ENCODE measurements at regions of chr17 and their contacts with region 1.

Region 1: DNA sequence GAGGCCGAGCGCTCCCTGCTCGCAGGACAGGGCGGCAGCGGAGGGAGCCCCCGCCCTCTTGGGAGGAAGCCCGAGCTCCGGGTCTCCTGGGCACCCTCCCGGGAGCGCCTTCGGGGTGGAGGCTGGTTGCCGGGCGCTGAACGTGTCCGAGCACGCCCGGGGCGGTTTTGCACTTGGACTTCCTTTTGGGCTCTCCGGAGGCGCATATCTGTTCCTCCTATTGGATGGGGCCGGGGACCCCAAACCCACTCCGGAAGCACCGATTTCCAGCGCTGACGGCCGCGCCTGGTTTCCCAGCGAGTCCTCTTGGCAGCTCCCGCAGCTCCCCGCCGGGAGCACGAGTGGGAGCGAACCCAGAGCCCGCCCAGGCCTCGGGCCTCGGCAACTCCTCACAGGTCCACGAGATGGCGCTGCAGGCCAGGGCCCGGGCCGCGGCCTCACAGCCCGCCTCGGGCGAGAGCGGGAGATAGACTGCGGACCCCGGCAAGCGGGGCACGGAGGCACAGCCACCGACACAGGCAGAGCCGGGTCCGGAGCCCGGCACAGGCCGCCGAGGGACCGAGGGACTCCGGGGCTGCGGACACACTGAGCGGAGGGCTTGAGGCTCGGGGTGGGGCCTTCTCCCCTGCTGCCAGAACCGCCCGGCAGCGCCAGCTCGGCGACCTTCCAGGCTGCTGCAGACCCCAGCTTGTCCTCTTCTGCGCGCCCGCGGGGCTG is 12.7 kb downstream of the TBX2 start:
- ATAC-seq: peak; percentile 44 to 81 (median 75)
- H3K4me3 ChIP-seq: peak overlapping the region; percentile 34 to 41 (median 40)
- H3K27ac ChIP-seq: no peak overlapping the region
- H3K4me1 ChIP-seq: peaks cover 0 to 3% of the 10 kb centered on the region in 2 donors

Region 2: DNA sequence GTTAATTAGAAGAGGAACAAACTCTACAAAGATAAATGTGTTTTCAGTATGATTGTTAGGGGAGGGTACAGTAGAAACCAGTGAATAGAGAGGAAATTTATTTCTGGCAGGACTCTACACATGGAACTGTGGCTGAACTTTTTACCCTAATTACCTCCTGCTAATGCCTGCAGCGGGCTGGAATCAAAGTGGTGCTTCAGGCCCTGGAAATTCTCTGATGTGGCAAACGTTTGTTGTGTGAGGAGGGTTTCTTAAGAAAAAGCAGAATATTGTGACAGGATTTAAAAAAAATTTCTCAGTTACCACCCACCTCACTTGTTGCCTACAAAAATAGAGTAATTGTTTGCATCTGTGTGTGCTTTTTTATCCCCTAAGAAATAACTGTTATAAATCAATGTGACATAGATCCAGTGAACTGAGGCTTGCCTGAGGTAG is 580.1 kb before region 1 on chr17:
- in situ Hi-C with region 1: no loop called
- ATAC-seq: peak; percentile 49 to 87 (median 71)
- H3K4me3 ChIP-seq: no peak overlapping the region
- H3K27ac ChIP-seq: no peak overlapping the region
- H3K4me1 ChIP-seq: peaks cover 6 to 14% of the 10 kb centered on the region in 2 donors

Region 3: DNA sequence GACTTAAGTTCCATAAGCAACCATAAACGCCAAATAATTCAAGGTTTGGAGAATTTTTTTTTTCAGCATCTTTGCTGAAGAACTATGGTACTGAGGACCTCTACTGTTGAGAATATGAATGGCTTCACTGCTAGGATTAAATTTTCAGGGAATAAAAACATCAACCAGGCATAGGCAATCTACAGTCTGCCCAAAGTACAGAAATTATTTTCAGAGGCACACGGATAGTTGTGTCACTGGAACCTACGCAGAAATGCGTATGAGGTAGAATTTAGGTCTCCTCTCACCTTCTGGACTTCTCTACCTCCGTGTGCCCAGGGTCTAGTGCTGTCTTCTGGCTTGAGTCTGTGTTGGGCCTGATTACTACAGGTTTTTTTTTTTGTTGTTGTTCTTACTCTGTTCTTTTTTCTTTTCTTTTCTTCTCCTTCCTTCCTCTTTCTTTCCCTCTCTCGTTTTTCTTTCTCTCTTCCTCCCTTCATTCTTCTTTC is 139.0 kb after region 1 on chr17:
- in situ Hi-C with region 1: loop called in 1 of 9 experiments (anchors 10 kb)
- ATAC-seq: peak in 3 of 8 experiments; percentile 22 to 62 (median 48)
- H3K4me3 ChIP-seq: no peak overlapping the region
- H3K27ac ChIP-seq: no peak overlapping the region
- H3K4me1 ChIP-seq: no peaks in the 10 kb centered on the region

Region 4: GRCh38 chr17:61837175-61838051 is 425.1 kb after region 1 on chr17:
- in situ Hi-C with region 1: loop called in 4 of 9 experiments (anchors 10 to 25 kb)
- ATAC-seq: peak; percentile 47 to 86 (median 60)
- H3K4me3 ChIP-seq: no peak overlapping the region
- H3K27ac ChIP-seq: no peak overlapping the region
- H3K4me1 ChIP-seq: no peaks in the 10 kb centered on the region

Region 5: GRCh38 chr17:61849674-61850073 is 437.4 kb after region 1 on chr17:
- in situ Hi-C with region 1: loop called in 4 of 9 experiments (anchors 10 to 25 kb)
- ATAC-seq: no peak
- H3K4me3 ChIP-seq: no peak overlapping the region
- H3K27ac ChIP-seq: no peak overlapping the region
- H3K4me1 ChIP-seq: no peaks in the 10 kb centered on the region

Measured in motor neuron (in vitro differentiated cells).